Caco-2 (cell line): ENCODE measurements at regions of chr4 and their contacts with region 1.

Region 1: GRCh38 chr4:38902695-38903094 is 35.1 kb downstream of the FAM114A1 start:
- DNase-seq: no peak
- H3K4me3 ChIP-seq: no peak overlapping the region
- H3K4me3 Mint-ChIP-seq: no peak overlapping the region
- H3K27ac Mint-ChIP-seq: no peak overlapping the region
- H3K4me1 ChIP-seq: peaks cover 38% of the 10 kb centered on the region
- H3K4me1 Mint-ChIP-seq: peaks cover 19% of the 10 kb centered on the region
- H3K27me3 ChIP-seq: no peaks in the 10 kb centered on the region
- H3K27me3 Mint-ChIP-seq: no peaks in the 10 kb centered on the region
- CTCF ChIP-seq: peak in 1 of 2 experiments; percentile 23

Region 2: GRCh38 chr4:38820329-38821061 is 82.2 kb before region 1 on chr4:
- CTCF ChIA-PET with region 1: no interaction called
- POLR2A ChIA-PET with region 1: no interaction called
- intact Hi-C with region 1: no loop called
- DNase-seq: no peak
- H3K4me3 ChIP-seq: no peak overlapping the region
- H3K4me3 Mint-ChIP-seq: no peak overlapping the region
- H3K27ac Mint-ChIP-seq: no peak overlapping the region
- H3K4me1 ChIP-seq: no peaks in the 10 kb centered on the region
- H3K4me1 Mint-ChIP-seq: no peaks in the 10 kb centered on the region
- H3K27me3 ChIP-seq: no peaks in the 10 kb centered on the region
- H3K27me3 Mint-ChIP-seq: peaks cover 3% of the 10 kb centered on the region
- CTCF ChIP-seq: no peak

Region 3: GRCh38 chr4:38993694-38994093 is 91.0 kb after region 1 on chr4:
- CTCF ChIA-PET with region 1: interaction called, 8 read pairs
- POLR2A ChIA-PET with region 1: no interaction called
- intact Hi-C with region 1: loop called (anchors 1 kb)
- DNase-seq: peak in 1 of 2 experiments; percentile 4
- H3K4me3 ChIP-seq: no peak overlapping the region
- H3K4me3 Mint-ChIP-seq: no peak overlapping the region
- H3K27ac Mint-ChIP-seq: no peak overlapping the region
- H3K4me1 ChIP-seq: no peaks in the 10 kb centered on the region
- H3K4me1 Mint-ChIP-seq: peaks cover 6% of the 10 kb centered on the region
- H3K27me3 ChIP-seq: no peaks in the 10 kb centered on the region
- H3K27me3 Mint-ChIP-seq: no peaks in the 10 kb centered on the region
- CTCF ChIP-seq: peak in 1 of 2 experiments; percentile 15

Region 4: DNA sequence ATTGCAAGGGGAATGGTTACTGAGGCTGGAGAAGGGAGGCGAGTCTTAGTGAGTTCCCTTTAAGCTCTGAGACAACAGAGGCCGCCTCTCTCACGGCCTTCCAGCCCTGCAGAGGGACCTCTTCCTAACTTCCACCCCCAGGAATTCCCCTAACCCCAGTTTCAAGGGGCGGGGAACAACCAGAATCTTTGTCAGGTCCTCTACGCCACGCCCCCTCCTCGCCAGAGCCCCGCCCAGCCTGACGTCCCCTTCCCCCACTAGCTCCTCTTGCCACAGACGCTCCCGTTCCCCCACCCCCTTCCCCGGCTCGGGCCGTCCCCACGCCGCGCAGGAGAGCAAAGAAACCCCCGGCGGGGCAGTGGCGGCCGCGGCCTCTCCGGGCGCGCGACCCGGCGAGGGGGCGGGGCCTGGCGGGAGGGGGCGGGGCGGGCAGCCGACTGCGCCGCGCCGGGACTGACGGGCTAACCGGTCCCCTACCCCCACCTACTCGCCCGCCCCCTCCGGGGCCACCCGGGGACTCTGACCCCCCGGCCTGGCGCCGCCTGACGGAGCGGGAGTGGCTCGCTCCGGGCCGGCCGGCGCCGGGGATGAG is 141.8 kb after region 1 on chr4:
- CTCF ChIA-PET with region 1: interaction called, 30 read pairs
- POLR2A ChIA-PET with region 1: interaction called, 6 read pairs
- intact Hi-C with region 1: loop called (anchors 1 kb)
- DNase-seq: peak; percentile 96 to 98
- H3K4me3 ChIP-seq: peak overlapping the region; percentile 42
- H3K4me3 Mint-ChIP-seq: peak overlapping the region; percentile 89
- H3K27ac Mint-ChIP-seq: peak overlapping the region; percentile 92
- H3K4me1 ChIP-seq: peaks cover 28% of the 10 kb centered on the region
- H3K4me1 Mint-ChIP-seq: peaks cover 27% of the 10 kb centered on the region
- H3K27me3 ChIP-seq: no peaks in the 10 kb centered on the region
- H3K27me3 Mint-ChIP-seq: no peaks in the 10 kb centered on the region
- CTCF ChIP-seq: no peak

Region 5: DNA sequence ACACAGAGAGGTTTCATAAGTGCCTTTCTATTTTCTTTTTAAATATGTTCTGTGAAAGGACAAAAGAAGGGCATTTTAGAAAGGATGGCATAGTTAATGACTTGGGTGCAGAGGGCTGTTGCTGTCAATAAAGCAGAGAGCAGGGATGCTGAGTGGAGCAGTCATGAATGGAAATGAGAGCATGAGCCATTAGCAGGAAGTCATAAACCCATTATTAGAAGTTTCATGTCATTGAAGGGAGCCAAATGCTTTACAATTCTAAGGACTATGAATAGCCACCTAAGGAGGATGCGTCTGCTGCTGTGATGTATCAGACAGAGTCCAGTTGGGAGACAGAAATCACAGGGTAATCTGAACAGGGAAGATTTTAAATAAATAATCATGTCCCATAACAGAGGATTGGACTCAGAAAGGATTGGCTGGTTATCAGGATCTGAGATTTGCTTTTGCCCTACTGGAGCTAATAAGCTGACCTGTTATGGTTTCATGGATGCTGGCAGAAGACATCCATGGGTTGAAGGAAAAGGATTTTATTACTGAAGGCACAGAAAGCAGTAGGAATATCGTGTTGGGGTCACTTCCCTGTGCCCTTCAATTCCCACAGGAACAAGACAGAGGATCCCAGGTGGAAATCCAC is 232.1 kb after region 1 on chr4:
- CTCF ChIA-PET with region 1: interaction called, 85 read pairs
- POLR2A ChIA-PET with region 1: no interaction called
- intact Hi-C with region 1: loop called (anchors 1 kb)
- DNase-seq: peak in 1 of 2 experiments; percentile 3
- H3K4me3 ChIP-seq: peak overlapping the region; percentile 11; the same call in 1 of the 2 replicates
- H3K4me3 Mint-ChIP-seq: peak overlapping the region; percentile 1
- H3K27ac Mint-ChIP-seq: peak overlapping the region; percentile 7
- H3K4me1 ChIP-seq: peaks cover 8% of the 10 kb centered on the region; the same call in 1 of the 2 replicates
- H3K4me1 Mint-ChIP-seq: no peaks in the 10 kb centered on the region
- H3K27me3 ChIP-seq: no peaks in the 10 kb centered on the region
- H3K27me3 Mint-ChIP-seq: no peaks in the 10 kb centered on the region
- CTCF ChIP-seq: no peak

Region 6: DNA sequence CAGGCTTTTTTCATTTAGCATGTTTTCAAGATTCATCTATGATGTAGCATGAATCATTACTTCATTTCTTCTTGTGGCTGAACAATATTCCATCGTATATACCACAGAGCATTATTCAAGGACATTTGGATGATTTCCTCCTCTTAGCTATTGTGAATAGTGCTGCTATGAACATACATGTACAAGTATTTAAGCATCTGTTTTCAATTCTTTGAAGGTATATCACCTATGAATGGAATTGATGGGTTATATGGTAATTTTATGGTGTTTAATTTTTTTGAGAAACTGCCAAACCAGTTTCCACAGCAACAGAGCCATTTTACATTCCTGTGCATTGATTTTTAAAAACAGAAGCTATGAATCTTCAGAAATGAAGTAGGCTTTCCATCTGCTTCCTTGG is 243.5 kb after region 1 on chr4:
- CTCF ChIA-PET with region 1: interaction called, 12 read pairs
- POLR2A ChIA-PET with region 1: no interaction called
- intact Hi-C with region 1: no loop called
- DNase-seq: no peak
- H3K4me3 ChIP-seq: no peak overlapping the region
- H3K4me3 Mint-ChIP-seq: no peak overlapping the region
- H3K27ac Mint-ChIP-seq: no peak overlapping the region
- H3K4me1 ChIP-seq: no peaks in the 10 kb centered on the region
- H3K4me1 Mint-ChIP-seq: no peaks in the 10 kb centered on the region
- H3K27me3 ChIP-seq: no peaks in the 10 kb centered on the region
- H3K27me3 Mint-ChIP-seq: no peaks in the 10 kb centered on the region
- CTCF ChIP-seq: no peak

Region 7: GRCh38 chr4:39181905-39182638 is 279.4 kb after region 1 on chr4 and contains the start of gene WDR19:
- CTCF ChIA-PET with region 1: interaction called, 6 read pairs
- POLR2A ChIA-PET with region 1: no interaction called
- intact Hi-C with region 1: loop called (anchors 1 kb)
- DNase-seq: peak; percentile 98
- H3K4me3 ChIP-seq: peak within 1 kb of the TSS; percentile 56
- H3K4me3 Mint-ChIP-seq: no peak within 1 kb of the TSS
- H3K27ac Mint-ChIP-seq: no peak within 1 kb of the TSS
- H3K4me1 ChIP-seq: peaks cover 5% of the 10 kb centered on the region; the same call in 1 of the 2 replicates
- H3K4me1 Mint-ChIP-seq: no peaks in the 10 kb centered on the region
- H3K27me3 ChIP-seq: no peaks in the 10 kb centered on the region
- H3K27me3 Mint-ChIP-seq: peaks cover 2% of the 10 kb centered on the region
- CTCF ChIP-seq: peak; percentile 36 to 54
- total RNA-seq, gene WDR19: 9.5 and 11.9 TPM in 2 replicates

Region 8: GRCh38 chr4:39458505-39459300 is 556.0 kb after region 1 on chr4 and contains the starts of genes LIAS and RPL9:
- CTCF ChIA-PET with region 1: no interaction called
- POLR2A ChIA-PET with region 1: no interaction called
- intact Hi-C with region 1: loop called (anchors 10 kb)
- DNase-seq: peak; percentile 95 to 98
- H3K4me3 ChIP-seq: peak within 1 kb of the TSS; percentile 76
- H3K4me3 Mint-ChIP-seq: peak within 1 kb of the TSS; percentile 88
- H3K27ac Mint-ChIP-seq: peak within 1 kb of the TSS; percentile 96
- H3K4me1 ChIP-seq: peaks cover 11% of the 10 kb centered on the region
- H3K4me1 Mint-ChIP-seq: peaks cover 6% of the 10 kb centered on the region
- H3K27me3 ChIP-seq: no peaks in the 10 kb centered on the region
- H3K27me3 Mint-ChIP-seq: no peaks in the 10 kb centered on the region
- CTCF ChIP-seq: no peak
- total RNA-seq, gene LIAS: 19.5 and 21.1 TPM in 2 replicates
- total RNA-seq, gene RPL9: 976 and 978 TPM in 2 replicates